CD4-positive, alpha-beta T cell (primary cell): ENCODE measurements at regions of chr7 and their contacts with region 1.

Region 1: DNA sequence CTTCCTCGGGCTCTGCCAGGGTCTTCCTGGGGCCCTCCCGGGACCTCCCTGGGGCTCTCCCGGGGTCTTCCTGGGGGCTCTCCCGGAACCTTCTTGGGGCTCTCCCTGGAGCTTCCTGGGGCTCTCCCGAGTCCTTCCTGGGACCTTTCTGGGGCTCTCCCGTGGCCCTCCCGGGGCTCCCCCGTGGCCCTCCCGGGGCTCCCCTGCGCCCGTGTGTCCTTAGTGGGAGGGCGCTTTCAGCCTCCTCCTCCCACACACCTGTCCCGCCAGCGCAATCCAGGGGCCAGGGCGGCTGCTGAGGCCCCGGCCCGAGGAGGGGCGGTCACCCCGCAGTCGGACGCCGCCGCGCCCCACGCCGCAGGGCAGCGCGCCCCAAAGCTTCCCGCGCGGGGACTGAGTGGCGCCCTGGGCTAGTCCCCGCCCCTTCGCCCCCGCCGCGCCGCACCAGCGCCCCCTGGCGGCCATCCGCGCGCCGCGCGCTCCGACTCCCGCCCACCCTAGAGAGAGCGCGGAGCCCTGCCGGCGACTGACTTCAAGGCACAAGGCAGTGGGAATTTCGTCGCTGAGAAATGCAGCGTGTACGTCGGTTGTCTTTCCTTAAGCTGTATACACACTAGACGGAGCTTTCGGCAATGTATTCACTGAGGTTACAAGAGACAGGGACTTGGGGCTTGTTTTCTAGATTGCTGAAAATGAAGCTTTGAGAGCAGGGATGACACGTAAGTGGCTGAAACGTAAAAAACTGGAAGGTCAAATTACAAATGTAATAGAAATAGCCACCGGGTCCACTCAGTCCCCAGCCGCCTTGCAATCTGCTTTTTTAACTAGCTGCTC is 47.1 kb downstream of the INSIG1 start:
- DNase-seq: peak; percentile 64 to 91 (median 80)
- ATAC-seq: peak; percentile 97
- H3K4me3 ChIP-seq: peak overlapping the region; percentile 47
- H3K4me3 Mint-ChIP-seq: peak overlapping the region; percentile 35
- H3K27ac ChIP-seq: no peak overlapping the region
- H3K27ac Mint-ChIP-seq: no peak overlapping the region
- H3K4me1 ChIP-seq: peaks cover 11% of the 10 kb centered on the region
- H3K4me1 Mint-ChIP-seq: peaks cover 5% of the 10 kb centered on the region
- H3K27me3 ChIP-seq: peaks cover 11 to 12% of the 10 kb centered on the region in 2 experiments
- H3K27me3 Mint-ChIP-seq: peaks cover 10% of the 10 kb centered on the region
- CTCF ChIP-seq: peak; percentile 70

Region 2: GRCh38 chr7:154913638-154914312 is 431.0 kb before region 1 on chr7:
- CTCF ChIA-PET with region 1: interaction called, 11 read pairs
- POLR2A ChIA-PET with region 1: interaction called, 4 read pairs
- intact Hi-C with region 1: no loop called
- DNase-seq: peak; percentile 81 to 93 (median 86)
- ATAC-seq: peak; percentile 98
- H3K4me3 ChIP-seq: peak overlapping the region; percentile 49
- H3K4me3 Mint-ChIP-seq: peak overlapping the region; percentile 84
- H3K27ac ChIP-seq: no peak overlapping the region
- H3K27ac Mint-ChIP-seq: no peak overlapping the region
- H3K4me1 ChIP-seq: peaks cover 10% of the 10 kb centered on the region
- H3K4me1 Mint-ChIP-seq: peaks cover 5% of the 10 kb centered on the region
- H3K27me3 ChIP-seq: peaks cover 0 to 10% of the 10 kb centered on the region in 2 experiments
- H3K27me3 Mint-ChIP-seq: peaks cover 26% of the 10 kb centered on the region
- CTCF ChIP-seq: peak; percentile 94

Region 3: DNA sequence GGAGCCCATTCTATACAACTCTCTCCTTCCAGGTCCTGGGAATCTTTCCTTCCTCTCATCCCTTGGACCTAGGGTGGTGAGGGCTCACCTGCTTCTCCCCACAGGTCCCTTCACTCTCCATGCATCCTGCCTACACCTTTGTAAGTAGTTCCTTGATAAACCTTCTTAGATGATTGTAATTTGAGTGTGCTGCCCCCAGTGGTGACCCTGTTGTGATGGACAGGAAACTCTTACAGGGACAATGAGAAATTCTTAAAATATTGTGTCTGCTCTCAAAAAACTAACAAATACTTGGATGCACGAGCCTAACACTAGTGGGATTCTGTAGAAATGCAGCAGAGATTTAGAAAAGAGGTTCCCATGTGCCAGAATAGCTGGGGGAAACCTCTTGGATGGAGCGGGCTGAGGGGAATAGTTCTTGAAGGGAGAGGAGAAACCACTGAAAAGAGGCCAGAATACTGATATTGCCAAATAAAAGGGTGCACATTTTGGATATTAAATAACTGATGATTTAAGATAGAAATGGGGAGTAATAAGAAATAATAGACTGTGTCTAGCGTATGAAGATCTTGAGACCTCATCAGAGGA is 335.2 kb before region 1 on chr7:
- CTCF ChIA-PET with region 1: interaction called, 9 read pairs
- POLR2A ChIA-PET with region 1: no interaction called
- intact Hi-C with region 1: loop called in 1 of 2 experiments (anchors 2 kb)
- DNase-seq: peak in 8 of 14 experiments; percentile 12 to 53 (median 28)
- ATAC-seq: no peak
- H3K4me3 ChIP-seq: no peak overlapping the region
- H3K4me3 Mint-ChIP-seq: no peak overlapping the region
- H3K27ac ChIP-seq: no peak overlapping the region
- H3K27ac Mint-ChIP-seq: no peak overlapping the region
- H3K4me1 ChIP-seq: no peaks in the 10 kb centered on the region
- H3K4me1 Mint-ChIP-seq: peaks cover 15% of the 10 kb centered on the region
- H3K27me3 ChIP-seq: no peaks in the 10 kb centered on the region
- H3K27me3 Mint-ChIP-seq: no peaks in the 10 kb centered on the region
- CTCF ChIP-seq: peak; percentile 57

Region 4: GRCh38 chr7:155190688-155191087 is 154.1 kb before region 1 on chr7:
- CTCF ChIA-PET with region 1: interaction called, 24 read pairs
- POLR2A ChIA-PET with region 1: no interaction called
- intact Hi-C with region 1: loop called (anchors 1 kb)
- DNase-seq: peak in 13 of 14 experiments; percentile 37 to 75 (median 58)
- ATAC-seq: peak; percentile 73
- H3K4me3 ChIP-seq: no peak overlapping the region
- H3K4me3 Mint-ChIP-seq: no peak overlapping the region
- H3K27ac ChIP-seq: no peak overlapping the region
- H3K27ac Mint-ChIP-seq: no peak overlapping the region
- H3K4me1 ChIP-seq: peaks cover 5% of the 10 kb centered on the region
- H3K4me1 Mint-ChIP-seq: no peaks in the 10 kb centered on the region
- H3K27me3 ChIP-seq: no peaks in the 10 kb centered on the region
- H3K27me3 Mint-ChIP-seq: peaks cover 26% of the 10 kb centered on the region
- CTCF ChIP-seq: peak; percentile 86

Region 5: GRCh38 chr7:155205368-155206317 is 139.2 kb before region 1 on chr7:
- CTCF ChIA-PET with region 1: interaction called, 19 read pairs
- POLR2A ChIA-PET with region 1: interaction called, 8 read pairs
- intact Hi-C with region 1: loop called in 1 of 2 experiments (anchors 5 kb)
- DNase-seq: peak; percentile 67 to 98 (median 81)
- ATAC-seq: peak; percentile 91
- H3K4me3 ChIP-seq: peak overlapping the region; percentile 69
- H3K4me3 Mint-ChIP-seq: peak overlapping the region; percentile 91
- H3K27ac ChIP-seq: peak overlapping the region; percentile 67 to 93
- H3K27ac Mint-ChIP-seq: peak overlapping the region; percentile 93
- H3K4me1 ChIP-seq: peaks cover 29% of the 10 kb centered on the region
- H3K4me1 Mint-ChIP-seq: peaks cover 22% of the 10 kb centered on the region
- H3K27me3 ChIP-seq: no peaks in the 10 kb centered on the region
- H3K27me3 Mint-ChIP-seq: no peaks in the 10 kb centered on the region
- CTCF ChIP-seq: no peak

Region 6: GRCh38 chr7:155234158-155234492 is 110.7 kb before region 1 on chr7:
- CTCF ChIA-PET with region 1: interaction called, 11 read pairs
- POLR2A ChIA-PET with region 1: no interaction called
- intact Hi-C with region 1: loop called in 1 of 2 experiments (anchors 1 kb)
- DNase-seq: peak in 6 of 14 experiments; percentile 6 to 39 (median 20)
- ATAC-seq: no peak
- H3K4me3 ChIP-seq: no peak overlapping the region
- H3K4me3 Mint-ChIP-seq: no peak overlapping the region
- H3K27ac ChIP-seq: no peak overlapping the region
- H3K27ac Mint-ChIP-seq: no peak overlapping the region
- H3K4me1 ChIP-seq: no peaks in the 10 kb centered on the region
- H3K4me1 Mint-ChIP-seq: no peaks in the 10 kb centered on the region
- H3K27me3 ChIP-seq: peaks cover 0 to 2% of the 10 kb centered on the region in 2 experiments
- H3K27me3 Mint-ChIP-seq: peaks cover 8% of the 10 kb centered on the region
- CTCF ChIP-seq: no peak

Region 7: DNA sequence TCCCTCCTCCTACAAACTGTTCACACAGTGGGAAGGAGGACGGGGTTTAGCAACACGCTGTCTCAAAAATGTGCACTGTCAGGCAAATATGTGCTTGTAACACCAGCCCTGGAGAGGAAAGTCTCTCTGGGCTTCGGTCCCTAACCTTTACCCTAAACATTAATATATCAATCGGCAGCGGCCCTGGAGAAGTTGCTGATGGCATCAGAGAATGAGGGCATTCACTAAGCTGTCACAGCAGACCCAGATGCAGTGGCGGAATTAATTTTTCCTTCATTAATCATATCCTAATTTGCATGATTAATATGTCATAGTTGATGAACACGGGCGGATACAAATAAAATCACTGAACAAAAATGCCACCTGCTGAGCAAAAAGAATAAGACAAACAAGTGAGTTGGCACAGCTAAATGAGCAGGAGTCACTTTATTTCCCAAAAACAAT is 92.4 kb before region 1 on chr7:
- CTCF ChIA-PET with region 1: interaction called, 11 read pairs
- POLR2A ChIA-PET with region 1: no interaction called
- intact Hi-C with region 1: no loop called
- DNase-seq: no peak
- ATAC-seq: no peak
- H3K4me3 ChIP-seq: no peak overlapping the region
- H3K4me3 Mint-ChIP-seq: no peak overlapping the region
- H3K27ac ChIP-seq: no peak overlapping the region
- H3K27ac Mint-ChIP-seq: no peak overlapping the region
- H3K4me1 ChIP-seq: no peaks in the 10 kb centered on the region
- H3K4me1 Mint-ChIP-seq: no peaks in the 10 kb centered on the region
- H3K27me3 ChIP-seq: no peaks in the 10 kb centered on the region
- H3K27me3 Mint-ChIP-seq: peaks cover 4% of the 10 kb centered on the region
- CTCF ChIP-seq: no peak

Region 8: DNA sequence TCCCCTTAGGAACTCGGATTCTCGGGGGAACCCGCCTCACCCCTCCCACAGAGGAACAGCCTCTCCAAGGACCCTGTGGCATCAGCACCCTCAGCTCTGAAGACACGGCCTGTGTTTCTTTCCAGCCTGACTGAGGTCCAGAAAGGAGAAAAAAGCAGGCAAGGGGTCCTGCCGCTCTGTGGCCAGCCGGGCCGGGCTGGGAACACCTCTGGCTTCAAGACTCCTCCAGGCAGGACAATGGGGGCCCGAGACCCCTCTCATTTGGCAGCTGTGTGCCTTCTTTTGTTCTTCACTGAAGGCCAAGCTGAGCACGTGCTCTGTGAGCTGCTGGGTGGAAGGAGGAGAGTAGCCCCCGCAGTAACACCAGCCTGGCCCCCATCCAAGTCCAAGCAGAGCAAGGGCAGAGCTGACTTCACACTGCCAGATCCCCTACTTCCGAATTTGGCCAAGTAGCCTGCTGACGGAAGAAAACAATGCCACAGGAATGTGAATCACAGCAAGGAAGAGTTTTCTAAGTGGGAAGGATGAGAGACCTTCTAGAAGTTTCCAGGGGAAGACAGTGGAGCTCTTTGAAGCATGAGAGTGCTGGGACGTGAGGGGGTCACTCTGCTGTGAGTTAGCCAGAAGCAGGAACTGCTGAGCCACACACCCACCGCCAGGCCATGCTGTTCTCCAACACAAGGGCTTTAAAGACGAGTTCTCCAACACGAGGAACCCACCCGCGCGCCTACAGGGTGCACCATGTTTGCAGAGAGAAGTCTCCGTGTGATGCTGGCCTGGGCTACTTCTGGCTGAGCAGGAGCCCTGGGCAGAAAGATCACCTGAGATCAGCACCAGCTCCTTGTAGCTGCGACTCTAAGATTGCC is 198.4 kb after region 1 on chr7:
- CTCF ChIA-PET with region 1: no interaction called
- POLR2A ChIA-PET with region 1: no interaction called
- intact Hi-C with region 1: no loop called
- DNase-seq: no peak
- ATAC-seq: no peak
- H3K4me3 ChIP-seq: no peak overlapping the region
- H3K4me3 Mint-ChIP-seq: no peak overlapping the region
- H3K27ac ChIP-seq: no peak overlapping the region
- H3K27ac Mint-ChIP-seq: no peak overlapping the region
- H3K4me1 ChIP-seq: no peaks in the 10 kb centered on the region
- H3K4me1 Mint-ChIP-seq: no peaks in the 10 kb centered on the region
- H3K27me3 ChIP-seq: peaks cover 2 to 4% of the 10 kb centered on the region in 2 experiments
- H3K27me3 Mint-ChIP-seq: peaks cover 27% of the 10 kb centered on the region
- CTCF ChIP-seq: no peak